ENCODE measurements at regions of chr2 and their contacts with region 1.

Region 1: DNA sequence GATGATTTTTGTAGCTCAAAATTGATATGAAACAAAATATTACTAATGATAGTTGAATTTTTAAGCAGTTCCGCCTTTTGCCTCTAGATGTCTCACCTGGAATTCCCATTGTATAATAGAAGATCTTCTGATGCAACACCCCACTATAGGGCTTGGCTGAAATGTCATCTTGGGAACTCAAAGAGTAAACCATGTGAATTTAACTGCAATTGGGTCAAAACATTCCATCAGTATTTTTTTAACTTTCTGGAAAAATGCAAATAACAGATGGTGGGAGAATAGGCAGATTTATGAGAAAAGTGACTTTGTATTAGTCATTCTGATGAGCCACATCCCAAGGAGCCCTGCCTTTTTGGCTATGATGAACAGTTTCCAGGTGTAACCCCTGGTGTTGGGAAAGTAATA is 489.9 kb downstream of the NYAP2 start:
- DNase-seq: peak in 3 of 14 experiments; percentile 29 to 31 (median 29)
- ATAC-seq: no peak
- H3K4me3 ChIP-seq: no peak overlapping the region
- H3K4me3 Mint-ChIP-seq: no peak overlapping the region
- H3K27ac ChIP-seq: no peak overlapping the region
- H3K27ac Mint-ChIP-seq: no peak overlapping the region
- H3K4me1 ChIP-seq: no peaks in the 10 kb centered on the region
- H3K4me1 Mint-ChIP-seq: no peaks in the 10 kb centered on the region
- H3K27me3 ChIP-seq: peaks cover 0 to 3% of the 10 kb centered on the region in 2 experiments
- H3K27me3 Mint-ChIP-seq: peaks cover 8% of the 10 kb centered on the region
- CTCF ChIP-seq: peak; percentile 70

Region 2: DNA sequence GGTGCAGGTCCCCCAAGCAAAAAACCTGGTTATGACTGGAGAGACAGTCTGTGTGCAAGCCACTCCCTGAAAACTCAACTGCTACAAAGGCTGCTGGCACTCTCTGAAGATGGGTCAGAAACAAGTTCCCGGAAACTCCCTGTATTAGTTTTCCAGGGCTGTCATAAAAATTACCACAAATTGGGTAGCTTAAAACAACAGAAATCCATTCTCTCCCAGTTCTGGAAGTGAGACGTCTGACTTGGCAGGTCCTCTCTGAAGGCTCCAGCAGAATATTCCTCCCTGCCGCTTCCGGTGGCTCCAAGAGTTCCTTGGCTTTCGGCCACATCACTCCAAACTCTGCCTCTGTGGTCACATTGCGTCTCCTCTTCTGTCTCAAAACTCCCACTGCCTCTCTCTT is 1820.3 kb before region 1 on chr2:
- CTCF ChIA-PET with region 1: no interaction called
- POLR2A ChIA-PET with region 1: no interaction called
- intact Hi-C with region 1: loop called in 1 of 2 experiments (anchors 5 kb)
- DNase-seq: no peak
- ATAC-seq: no peak
- H3K4me3 ChIP-seq: no peak overlapping the region
- H3K4me3 Mint-ChIP-seq: no peak overlapping the region
- H3K27ac ChIP-seq: no peak overlapping the region
- H3K27ac Mint-ChIP-seq: no peak overlapping the region
- H3K4me1 ChIP-seq: no peaks in the 10 kb centered on the region
- H3K4me1 Mint-ChIP-seq: no peaks in the 10 kb centered on the region
- H3K27me3 ChIP-seq: peaks cover 0 to 4% of the 10 kb centered on the region in 2 experiments
- H3K27me3 Mint-ChIP-seq: peaks cover 4% of the 10 kb centered on the region
- CTCF ChIP-seq: no peak

Region 3: GRCh38 chr2:226489775-226490541 is 600.5 kb after region 1 on chr2:
- CTCF ChIA-PET with region 1: no interaction called
- POLR2A ChIA-PET with region 1: no interaction called
- intact Hi-C with region 1: no loop called
- DNase-seq: no peak
- ATAC-seq: no peak
- H3K4me3 ChIP-seq: no peak overlapping the region
- H3K4me3 Mint-ChIP-seq: no peak overlapping the region
- H3K27ac ChIP-seq: no peak overlapping the region
- H3K27ac Mint-ChIP-seq: no peak overlapping the region
- H3K4me1 ChIP-seq: no peaks in the 10 kb centered on the region
- H3K4me1 Mint-ChIP-seq: no peaks in the 10 kb centered on the region
- H3K27me3 ChIP-seq: no peaks in the 10 kb centered on the region
- H3K27me3 Mint-ChIP-seq: peaks cover 16% of the 10 kb centered on the region
- CTCF ChIP-seq: no peak